Right cardiac atrium (tissue), 5 donors: ENCODE measurements at regions of chr9 and their contacts with region 1.

Region 1: DNA sequence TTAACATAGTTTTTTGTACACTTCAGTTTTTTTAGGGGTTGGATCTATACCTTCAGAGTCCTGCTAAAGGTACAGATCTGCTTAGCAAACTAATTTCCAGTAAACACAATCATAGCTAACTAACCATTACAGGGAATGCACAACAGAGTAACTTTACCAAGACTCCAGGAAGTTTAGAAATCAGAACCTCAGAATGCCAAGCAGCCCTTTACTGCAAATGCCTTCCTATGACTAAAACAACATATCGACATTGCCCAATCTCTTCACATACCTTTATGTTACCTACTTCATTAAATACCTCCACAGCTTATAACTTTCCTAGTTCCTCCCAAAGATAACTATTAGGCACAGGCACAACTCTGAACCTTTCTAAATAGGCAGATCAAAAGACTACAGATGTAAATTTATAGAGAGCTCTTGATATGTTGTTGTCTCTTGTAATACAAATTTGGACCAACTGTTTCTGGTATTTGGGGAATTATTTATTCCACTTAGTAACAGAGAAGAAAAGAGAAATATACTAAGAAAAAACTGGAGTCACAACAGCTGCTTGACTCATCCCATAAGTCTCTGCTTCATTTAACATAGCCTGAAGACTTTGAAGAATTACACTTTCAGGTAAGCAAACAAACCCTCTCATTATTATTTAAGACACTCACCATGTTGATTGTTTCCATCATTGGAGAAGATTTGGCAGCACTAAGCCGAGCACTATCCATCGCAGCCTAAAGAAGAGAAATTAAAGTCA is 46.0 kb upstream of the OR2K2 start:
- DNase-seq: no peak
- ATAC-seq: no peak
- H3K4me3 ChIP-seq: no peak overlapping the region
- H3K27ac ChIP-seq: no peak overlapping the region
- H3K4me1 ChIP-seq: no peaks in the 10 kb centered on the region
- H3K27me3 ChIP-seq: no peaks in the 10 kb centered on the region

Region 2: GRCh38 chr9:111427186-111427585 is 51.2 kb after region 1 on chr9:
- intact Hi-C with region 1: loop called in 1 of 4 experiments (anchors 10 kb)
- DNase-seq: no peak
- ATAC-seq: peak in 1 of 2 donors; percentile 23
- H3K4me3 ChIP-seq: no peak overlapping the region
- H3K27ac ChIP-seq: no peak overlapping the region
- H3K4me1 ChIP-seq: no peaks in the 10 kb centered on the region
- H3K27me3 ChIP-seq: no peaks in the 10 kb centered on the region

Region 3: DNA sequence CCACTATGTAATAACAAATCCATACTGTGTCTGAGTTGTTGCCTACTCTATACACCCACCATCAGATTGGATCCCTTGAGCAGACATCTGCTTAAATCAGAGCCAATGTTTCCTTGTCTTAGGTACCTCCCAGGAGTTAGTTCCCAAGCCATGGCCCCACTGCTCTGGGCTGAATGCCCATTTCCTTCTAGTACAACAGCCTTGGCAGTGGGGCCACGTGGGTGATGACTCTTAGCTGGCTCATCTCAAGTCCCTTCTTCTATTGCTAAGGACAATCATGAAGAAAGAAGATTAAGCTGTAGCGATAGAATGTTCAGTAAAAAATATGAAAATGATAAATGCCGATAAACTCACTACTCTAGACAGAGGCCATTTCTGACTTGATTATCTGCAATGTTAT is 206.9 kb after region 1 on chr9:
- intact Hi-C with region 1: no loop called
- DNase-seq: no peak
- ATAC-seq: no peak
- H3K4me3 ChIP-seq: no peak overlapping the region
- H3K27ac ChIP-seq: no peak overlapping the region
- H3K4me1 ChIP-seq: no peaks in the 10 kb centered on the region
- H3K27me3 ChIP-seq: no peaks in the 10 kb centered on the region

Region 4: DNA sequence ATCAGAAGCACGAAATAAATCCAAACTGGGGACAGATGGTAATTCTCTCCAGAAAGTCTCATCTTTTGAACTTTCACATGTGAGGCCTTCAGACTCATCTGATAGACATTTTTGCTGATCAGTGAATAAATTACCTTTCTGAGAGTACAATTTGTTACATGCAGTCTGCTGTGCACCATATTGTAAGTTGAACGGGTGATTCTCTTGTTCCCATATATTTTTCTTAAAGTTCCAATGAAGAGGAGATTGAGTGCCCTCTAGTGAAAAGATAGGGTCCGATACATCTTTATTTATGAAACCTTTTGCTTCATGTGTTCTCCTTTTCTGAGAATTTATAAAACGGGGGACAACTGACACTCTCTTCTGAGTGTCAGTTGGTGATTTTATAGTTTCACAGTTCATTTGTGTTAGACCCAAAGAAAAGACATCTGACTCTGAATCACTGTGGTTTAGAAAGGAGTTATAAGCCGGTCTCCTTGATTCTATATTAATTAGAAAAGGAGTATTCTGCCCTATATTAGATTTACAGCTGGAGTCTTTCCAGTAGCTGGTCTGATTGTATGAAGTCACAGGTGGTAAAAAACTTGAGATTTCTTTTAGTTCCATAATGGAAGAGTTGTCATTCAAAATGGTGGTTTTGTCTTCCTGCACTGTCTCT is 315.8 kb after region 1 on chr9:
- intact Hi-C with region 1: no loop called
- DNase-seq: no peak
- ATAC-seq: no peak
- H3K4me3 ChIP-seq: no peak overlapping the region
- H3K27ac ChIP-seq: no peak overlapping the region
- H3K4me1 ChIP-seq: no peaks in the 10 kb centered on the region
- H3K27me3 ChIP-seq: no peaks in the 10 kb centered on the region